PC-3 (cell line): ENCODE measurements at regions of chr14 and their contacts with region 1.

Region 1: DNA sequence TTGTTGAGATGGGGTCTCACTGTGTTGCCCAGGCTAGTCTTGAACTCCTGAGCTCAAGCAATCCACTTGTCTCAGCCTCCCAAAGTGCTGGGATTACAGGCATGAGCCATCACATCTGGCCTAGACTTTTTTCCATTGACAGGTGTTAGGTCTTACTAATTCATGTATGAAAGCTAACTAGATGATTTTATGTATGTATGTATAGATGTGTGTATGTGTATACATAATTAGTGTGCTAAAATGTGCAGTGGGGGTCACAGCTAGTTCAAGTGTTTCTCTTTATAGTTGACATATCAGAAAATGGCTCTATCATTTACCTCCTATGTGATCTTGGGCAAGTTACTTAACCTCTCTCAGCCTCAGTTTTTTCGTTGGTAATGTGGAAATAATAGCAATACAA is 23.5 kb downstream of the UNC79 start:
- DNase-seq: no peak
- ATAC-seq: no peak
- H3K4me3 ChIP-seq: no peak overlapping the region
- H3K27ac ChIP-seq: no peak overlapping the region
- H3K4me1 ChIP-seq: no peaks in the 10 kb centered on the region
- H3K27me3 ChIP-seq: peaks cover 59% of the 10 kb centered on the region
- CTCF ChIP-seq: no peak

Region 2: DNA sequence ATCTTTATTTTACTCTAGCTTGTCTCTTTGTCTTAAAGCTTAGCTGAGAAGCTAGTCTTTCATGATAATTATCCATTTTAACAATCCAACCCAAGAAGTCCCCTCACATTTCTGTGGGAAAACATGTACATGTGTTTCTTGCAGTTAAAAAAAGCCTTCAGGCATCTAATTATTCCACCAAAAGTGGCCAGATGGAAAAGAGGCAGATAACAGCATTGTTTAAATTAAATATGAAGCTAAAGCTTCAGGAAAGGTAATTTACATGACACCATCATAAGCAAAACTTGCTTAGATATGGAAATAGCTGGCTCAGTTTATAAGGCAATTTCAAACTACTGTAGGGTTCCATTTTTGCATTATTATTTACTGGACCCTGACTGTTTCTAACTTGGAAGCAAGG is 151.9 kb after region 1 on chr14:
- CTCF ChIA-PET with region 1: no interaction called
- POLR2A ChIA-PET with region 1: interaction called, 3 read pairs
- intact Hi-C with region 1: loop called (anchors 10 kb)
- DNase-seq: no peak
- ATAC-seq: no peak
- H3K4me3 ChIP-seq: no peak overlapping the region
- H3K27ac ChIP-seq: no peak overlapping the region
- H3K4me1 ChIP-seq: no peaks in the 10 kb centered on the region
- H3K27me3 ChIP-seq: peaks cover 65% of the 10 kb centered on the region
- CTCF ChIP-seq: no peak